Activated B cell treated with CpG ODN at 0.5 μM for 24 hours (primary cell): ENCODE measurements at regions of chr1 and their contacts with region 1.

Region 1: GRCh38 chr1:167627865-167628641 is 2.0 kb upstream of the RCSD1 start:
- DNase-seq: peak; percentile 52
- ATAC-seq: peak; percentile 70
- H3K4me3 Mint-ChIP-seq: peak overlapping the region; percentile 94
- H3K27ac Mint-ChIP-seq: peak overlapping the region; percentile 98
- H3K4me1 Mint-ChIP-seq: peaks cover 76% of the 10 kb centered on the region
- H3K27me3 Mint-ChIP-seq: no peaks in the 10 kb centered on the region
- CTCF ChIP-seq: no peak

Region 2: GRCh38 chr1:167553136-167554027 is 74.7 kb before region 1 on chr1 and contains the start of gene CREG1:
- CTCF ChIA-PET with region 1: no interaction called
- POLR2A ChIA-PET with region 1: interaction called, 6 read pairs
- intact Hi-C with region 1: loop called (anchors 5 kb)
- DNase-seq: peak; percentile 84
- ATAC-seq: peak; percentile 99
- H3K4me3 Mint-ChIP-seq: peak within 1 kb of the TSS; percentile 86
- H3K27ac Mint-ChIP-seq: peak within 1 kb of the TSS; percentile 41
- H3K4me1 Mint-ChIP-seq: peaks cover 19% of the 10 kb centered on the region
- H3K27me3 Mint-ChIP-seq: no peaks in the 10 kb centered on the region
- CTCF ChIP-seq: no peak
- total RNA-seq, gene CREG1: 3.1 and 3.8 TPM in 2 replicates

Region 3: GRCh38 chr1:167605576-167605975 is 22.5 kb before region 1 on chr1:
- CTCF ChIA-PET with region 1: interaction called, 229 read pairs
- POLR2A ChIA-PET with region 1: interaction called, 321 read pairs
- intact Hi-C with region 1: loop called (anchors 1 kb)
- DNase-seq: no peak
- ATAC-seq: no peak
- H3K4me3 Mint-ChIP-seq: no peak overlapping the region
- H3K27ac Mint-ChIP-seq: peak overlapping the region; percentile 21
- H3K4me1 Mint-ChIP-seq: peaks cover 36% of the 10 kb centered on the region
- H3K27me3 Mint-ChIP-seq: no peaks in the 10 kb centered on the region
- CTCF ChIP-seq: no peak

Region 4: DNA sequence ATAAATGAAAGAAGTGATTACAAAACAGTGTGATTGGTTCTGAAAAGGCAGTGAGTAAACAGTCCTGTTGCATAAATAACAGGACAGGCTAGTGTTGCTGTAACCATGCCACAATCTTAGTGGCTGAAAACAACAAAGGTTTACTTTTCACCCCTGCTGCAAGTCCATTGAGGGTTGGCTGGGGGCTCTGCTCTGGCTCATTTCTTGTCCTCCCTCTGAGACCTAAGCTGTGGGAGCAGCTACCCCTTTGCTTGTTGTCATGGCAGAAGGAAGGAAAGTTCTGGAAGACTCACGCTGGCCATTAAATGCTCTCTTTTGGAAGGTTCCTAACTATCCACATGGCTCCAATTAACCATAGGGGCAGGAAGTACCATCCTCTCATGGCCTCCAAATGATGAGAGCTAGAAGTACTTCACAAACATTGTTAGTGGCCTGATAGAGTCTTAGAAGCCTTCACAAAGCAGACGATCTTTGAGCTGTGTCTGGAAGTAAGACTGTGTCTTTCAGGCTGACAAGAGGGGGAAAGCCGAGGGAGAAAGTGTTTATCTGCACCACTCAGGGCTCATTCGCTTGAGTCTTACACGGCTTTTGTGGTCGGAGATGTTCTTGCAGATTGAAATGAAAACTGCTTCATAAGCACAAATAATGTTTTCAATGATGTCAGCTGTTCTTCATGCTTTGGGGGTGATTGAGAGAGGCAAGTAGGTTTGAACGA is 13.9 kb after region 1 on chr1:
- CTCF ChIA-PET with region 1: no interaction called
- POLR2A ChIA-PET with region 1: interaction called, 82 read pairs
- intact Hi-C with region 1: loop called (anchors 1 kb)
- DNase-seq: no peak
- ATAC-seq: no peak
- H3K4me3 Mint-ChIP-seq: no peak overlapping the region
- H3K27ac Mint-ChIP-seq: peak overlapping the region; percentile 10
- H3K4me1 Mint-ChIP-seq: peaks cover 99% of the 10 kb centered on the region
- H3K27me3 Mint-ChIP-seq: no peaks in the 10 kb centered on the region
- CTCF ChIP-seq: no peak

Region 5: DNA sequence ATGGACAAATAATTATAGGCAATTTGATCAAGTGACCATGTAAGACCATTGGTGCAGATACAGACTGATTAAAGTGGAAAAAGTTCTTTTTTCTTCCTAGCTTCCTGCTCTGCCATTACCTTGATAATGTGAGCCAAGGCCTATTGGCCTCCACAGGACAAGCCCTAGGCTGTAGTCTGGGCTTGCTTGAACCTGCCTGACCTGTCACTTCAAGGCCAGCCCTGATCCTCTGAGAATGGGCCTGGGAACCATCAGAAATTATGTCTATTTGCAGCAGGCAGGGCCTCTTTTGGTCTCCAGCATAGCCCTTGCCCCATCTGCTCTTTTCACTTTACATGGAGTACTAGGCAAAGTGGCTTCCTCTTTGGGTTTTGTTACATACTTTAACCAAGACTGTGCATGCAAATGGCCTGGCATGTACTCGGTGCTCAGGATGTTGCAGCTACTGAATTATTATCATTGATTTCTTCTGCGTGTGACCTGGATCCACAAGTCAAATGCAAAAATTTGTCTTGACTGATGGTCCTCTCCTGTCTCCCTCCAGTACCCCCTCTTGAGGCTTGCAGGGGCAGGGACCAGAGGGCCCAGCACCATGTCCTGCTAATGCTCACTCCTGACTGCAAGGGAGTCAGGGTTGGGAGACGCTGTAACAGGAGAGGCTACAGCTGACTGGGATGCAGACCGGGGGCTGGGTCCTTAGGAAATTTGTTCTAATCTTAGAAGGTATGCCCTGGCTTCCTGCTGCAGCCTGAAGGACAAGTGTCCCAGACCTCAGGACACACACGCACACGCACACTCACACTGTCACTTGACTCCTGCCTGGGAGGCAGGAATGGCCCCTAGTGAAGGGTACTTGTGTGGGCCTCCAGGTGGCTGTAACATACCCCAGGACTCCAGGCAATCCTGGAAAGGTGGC is 41.4 kb after region 1 on chr1:
- CTCF ChIA-PET with region 1: no interaction called
- POLR2A ChIA-PET with region 1: interaction called, 4 read pairs
- intact Hi-C with region 1: loop called (anchors 2 kb)
- DNase-seq: no peak
- ATAC-seq: peak; percentile 43
- H3K4me3 Mint-ChIP-seq: peak overlapping the region; percentile 49
- H3K27ac Mint-ChIP-seq: peak overlapping the region; percentile 77
- H3K4me1 Mint-ChIP-seq: peaks cover 99% of the 10 kb centered on the region
- H3K27me3 Mint-ChIP-seq: no peaks in the 10 kb centered on the region
- CTCF ChIP-seq: no peak

Region 6: DNA sequence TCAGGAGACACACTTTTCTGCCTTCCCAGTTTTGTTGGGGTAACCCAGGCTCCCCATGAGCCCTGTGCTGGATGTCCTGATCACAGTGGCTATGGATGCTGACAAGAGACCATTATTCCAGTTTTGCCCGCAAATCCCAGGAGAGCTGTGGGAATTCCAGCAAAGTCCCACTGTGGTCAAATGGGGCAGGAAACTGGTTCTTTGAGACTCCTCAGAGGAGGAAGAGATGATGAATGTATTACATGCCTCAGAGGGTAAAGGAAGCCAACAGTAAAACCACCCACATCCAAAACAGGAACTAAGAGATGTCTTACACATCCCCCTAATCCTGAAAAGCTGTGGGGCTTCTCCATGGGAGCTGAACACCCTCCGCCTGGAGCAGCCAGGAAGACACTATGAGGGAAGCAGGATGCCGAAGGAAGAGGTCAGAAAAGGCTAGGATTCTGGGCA is 80.9 kb after region 1 on chr1:
- CTCF ChIA-PET with region 1: no interaction called
- POLR2A ChIA-PET with region 1: interaction called, 12 read pairs
- intact Hi-C with region 1: no loop called
- DNase-seq: peak; percentile 53
- ATAC-seq: peak; percentile 72
- H3K4me3 Mint-ChIP-seq: peak overlapping the region; percentile 77
- H3K27ac Mint-ChIP-seq: peak overlapping the region; percentile 89
- H3K4me1 Mint-ChIP-seq: peaks cover 84% of the 10 kb centered on the region
- H3K27me3 Mint-ChIP-seq: no peaks in the 10 kb centered on the region
- CTCF ChIP-seq: no peak